Dendritic cell treated with granulocyte-macrophage colony-stimulating factor and Interleukin-4, amounts not matched to agents 40 ng/mL and 50 ng/mL, for 4 days (primary cell): ENCODE measurements at regions of chr22 and their contacts with region 1.

Region 1: GRCh38 chr22:23178512-23179254 is 1.6 kb upstream of the BCR start:
- H3K4me3 Mint-ChIP-seq: no peak overlapping the region
- H3K27ac Mint-ChIP-seq: no peak overlapping the region
- H3K4me1 Mint-ChIP-seq: peaks cover 31% of the 10 kb centered on the region
- H3K27me3 Mint-ChIP-seq: peaks cover 25% of the 10 kb centered on the region

Region 2: DNA sequence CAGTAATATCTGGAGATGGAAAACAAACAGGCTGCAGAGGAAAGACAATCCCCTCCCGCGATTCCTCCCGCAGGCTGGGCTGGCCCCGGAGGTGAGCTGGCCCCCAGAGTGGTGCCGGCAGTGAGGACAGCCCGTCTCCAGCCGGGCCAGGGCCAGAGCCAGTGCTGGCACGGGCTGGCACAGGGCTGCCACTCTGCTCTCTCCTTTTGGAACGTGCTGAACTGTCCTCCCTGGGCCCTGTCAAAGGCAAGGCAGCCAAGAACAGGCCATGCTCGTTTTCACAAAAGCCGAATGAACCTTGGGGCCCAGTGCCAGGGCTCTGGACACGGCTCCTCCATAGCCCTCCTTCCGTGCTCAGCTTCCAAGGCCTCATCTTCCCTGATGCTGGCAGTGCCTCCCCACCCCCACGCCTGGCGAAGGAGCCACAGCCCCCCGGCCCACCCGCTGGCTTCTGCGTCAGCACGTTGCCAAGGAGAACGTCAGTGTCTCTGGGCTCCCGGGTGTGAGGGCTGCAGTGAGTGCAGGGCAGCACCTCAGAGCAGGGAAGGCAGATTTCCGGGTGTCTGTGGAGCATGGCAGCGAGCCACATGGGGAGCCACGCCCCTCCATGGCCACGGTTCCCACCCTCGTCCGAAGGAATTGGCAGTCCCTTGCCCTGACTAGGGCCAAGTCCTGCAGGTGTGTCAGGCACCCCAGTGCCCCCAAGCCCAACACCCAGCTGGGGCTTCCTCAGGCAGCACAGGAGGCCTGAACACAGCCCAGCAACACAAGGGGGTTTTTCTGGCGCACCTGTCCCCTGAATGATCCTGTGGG is 79.8 kb before region 1 on chr22:
- intact Hi-C with region 1: no loop called
- H3K4me3 Mint-ChIP-seq: no peak overlapping the region
- H3K27ac Mint-ChIP-seq: no peak overlapping the region
- H3K4me1 Mint-ChIP-seq: no peaks in the 10 kb centered on the region
- H3K27me3 Mint-ChIP-seq: no peaks in the 10 kb centered on the region

Region 3: GRCh38 chr22:23163665-23164064 is 15.0 kb before region 1 on chr22:
- intact Hi-C with region 1: no loop called
- H3K4me3 Mint-ChIP-seq: no peak overlapping the region
- H3K27ac Mint-ChIP-seq: no peak overlapping the region
- H3K4me1 Mint-ChIP-seq: peaks cover 7% of the 10 kb centered on the region
- H3K27me3 Mint-ChIP-seq: peaks cover 1% of the 10 kb centered on the region

Region 4: GRCh38 chr22:23219822-23220484 is 41.3 kb after region 1 on chr22:
- intact Hi-C with region 1: loop called (anchors 5 kb)
- H3K4me3 Mint-ChIP-seq: peak overlapping the region; percentile 74
- H3K27ac Mint-ChIP-seq: peak overlapping the region; percentile 84
- H3K4me1 Mint-ChIP-seq: peaks cover 99% of the 10 kb centered on the region
- H3K27me3 Mint-ChIP-seq: no peaks in the 10 kb centered on the region

Region 5: DNA sequence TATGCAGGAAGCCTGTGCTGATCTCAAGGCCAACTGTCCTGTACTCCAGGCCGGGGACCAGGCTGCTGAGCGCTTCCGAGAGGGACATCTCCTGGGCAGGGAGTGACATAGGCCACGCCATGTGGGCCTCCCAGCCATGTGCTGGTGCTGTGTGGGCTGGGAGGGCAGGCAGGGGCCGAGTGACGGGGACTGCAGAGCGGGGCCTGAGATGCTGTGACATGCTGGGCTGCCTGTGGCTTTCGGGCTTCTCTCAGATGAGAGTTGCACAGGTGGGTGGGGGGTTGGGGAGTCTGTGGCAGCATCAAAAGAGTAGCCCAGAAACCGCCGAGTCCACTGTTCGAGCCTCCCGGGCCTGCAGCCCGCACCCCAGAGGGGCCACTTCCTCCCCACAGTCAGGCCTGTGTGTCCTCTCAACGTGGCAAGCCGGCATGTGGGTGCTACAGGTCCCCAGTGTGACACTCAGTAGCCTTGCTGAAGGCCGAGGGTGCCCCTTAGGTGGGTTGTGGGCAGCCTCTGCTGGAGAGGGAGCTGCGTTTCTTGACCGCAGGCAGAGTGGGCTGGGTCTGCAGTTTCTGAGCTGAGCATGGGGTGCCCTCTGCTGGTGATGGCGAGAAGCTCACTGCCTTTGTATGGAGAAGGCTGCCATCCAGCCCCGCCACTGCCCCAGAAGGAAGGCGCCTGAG is 102.9 kb after region 1 on chr22:
- intact Hi-C with region 1: loop called (anchors 1 kb)
- H3K4me3 Mint-ChIP-seq: no peak overlapping the region
- H3K27ac Mint-ChIP-seq: no peak overlapping the region
- H3K4me1 Mint-ChIP-seq: peaks cover 11% of the 10 kb centered on the region
- H3K27me3 Mint-ChIP-seq: no peaks in the 10 kb centered on the region

Region 6: DNA sequence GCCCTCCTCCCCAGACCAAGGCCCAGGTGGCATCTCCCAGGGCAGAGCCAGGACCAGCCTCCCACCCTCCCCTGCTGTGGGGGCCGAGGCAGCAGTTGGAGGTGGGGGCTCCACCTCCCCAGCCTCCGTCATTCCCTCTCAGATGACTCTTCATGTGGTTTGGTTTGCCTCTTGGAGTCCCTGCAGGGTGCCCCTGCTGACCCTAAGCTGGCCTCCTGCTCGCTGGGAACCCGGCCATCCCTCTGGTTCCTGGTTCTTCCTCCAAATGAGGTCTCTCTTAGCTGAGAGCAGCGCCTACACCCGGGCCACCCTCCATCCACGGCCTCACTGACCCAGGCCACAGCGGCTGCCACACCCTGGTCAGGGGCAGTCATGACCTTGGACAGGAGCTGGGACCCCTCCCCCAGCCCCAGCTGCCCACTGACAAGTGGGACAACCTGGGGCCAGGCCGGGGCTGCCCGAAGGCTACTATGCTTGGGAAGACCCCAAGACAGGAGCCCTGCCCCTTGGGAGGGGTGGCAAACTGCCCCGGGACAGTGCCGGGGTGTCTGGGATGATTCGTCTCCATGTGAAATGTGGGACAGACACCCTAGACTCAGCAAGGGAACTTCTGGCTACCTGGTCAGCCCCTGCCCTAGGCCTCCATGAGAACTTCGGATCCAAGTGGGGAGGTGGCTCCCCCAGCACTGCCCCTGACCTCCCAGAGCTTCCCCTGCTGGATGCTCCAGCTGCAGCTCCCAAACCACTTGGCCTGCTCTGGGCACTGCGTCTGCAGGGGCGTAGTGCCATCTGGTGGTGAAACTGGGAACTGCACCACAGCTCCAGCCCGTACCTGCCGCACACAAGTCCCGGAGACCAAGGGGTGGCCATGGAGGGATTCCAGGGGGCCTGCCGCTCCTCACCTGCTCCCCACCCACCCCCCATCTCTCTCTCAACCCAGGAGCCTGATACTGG is 206.9 kb after region 1 on chr22:
- intact Hi-C with region 1: loop called (anchors 10 kb)
- H3K4me3 Mint-ChIP-seq: no peak overlapping the region
- H3K27ac Mint-ChIP-seq: no peak overlapping the region
- H3K4me1 Mint-ChIP-seq: peaks cover 9% of the 10 kb centered on the region
- H3K27me3 Mint-ChIP-seq: peaks cover 3% of the 10 kb centered on the region